Activated CD8-positive, alpha-beta T cell treated with anti-CD3 and anti-CD28 coated beads, Interleukin-2, amount 10 ng/mL, durations not matched to agents 7 days and 5 days (primary cell): ENCODE measurements at regions of chr6 and their contacts with region 1.

Region 1: DNA sequence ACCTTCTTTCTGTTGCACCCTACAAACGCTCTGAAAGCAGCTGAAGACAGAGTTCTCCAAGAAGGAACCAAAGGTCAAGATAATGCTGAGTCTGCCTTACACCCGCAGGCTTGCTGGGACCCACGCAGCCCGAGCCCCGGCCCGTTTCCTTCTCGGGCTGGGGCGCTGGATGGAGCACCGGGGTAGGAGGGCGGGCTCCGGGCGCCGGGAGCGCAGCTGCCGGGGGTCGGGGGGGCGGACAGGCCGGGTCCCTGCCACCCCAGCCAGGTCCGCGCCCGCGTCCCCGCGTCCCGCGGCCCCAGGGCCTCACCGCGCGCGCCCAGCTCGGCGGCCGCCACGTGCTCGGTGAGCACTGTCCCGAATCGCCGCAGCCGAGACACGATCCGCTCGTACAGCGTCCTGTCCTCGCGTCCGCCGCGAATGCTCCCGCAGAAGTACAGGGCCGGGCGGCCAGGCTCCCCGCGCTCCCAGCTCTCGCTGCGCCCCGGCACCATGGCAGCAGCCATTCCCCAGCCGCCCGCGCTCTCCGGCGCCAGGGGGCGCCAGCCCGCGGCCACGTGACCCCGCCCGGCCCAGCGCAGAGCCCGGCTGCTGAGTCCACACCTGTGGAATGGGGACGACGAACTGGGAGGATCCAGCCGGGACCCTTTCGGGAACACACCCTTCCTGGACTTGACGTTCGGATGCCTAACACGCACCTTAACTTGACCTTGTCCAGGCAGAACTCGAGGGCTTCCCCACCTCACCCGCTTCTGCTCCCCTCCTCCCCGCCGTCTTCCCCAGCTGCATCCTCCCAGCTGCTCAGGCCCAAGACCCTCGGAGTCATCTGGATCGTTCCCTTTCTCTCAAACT is at the start of gene DNPH1:
- DNase-seq: peak; percentile 78
- ATAC-seq: peak; percentile 90
- H3K4me3 Mint-ChIP-seq: peak within 1 kb of the TSS; percentile 82
- H3K27ac Mint-ChIP-seq: peak within 1 kb of the TSS; percentile 86
- H3K4me1 Mint-ChIP-seq: peaks cover 46% of the 10 kb centered on the region
- H3K27me3 Mint-ChIP-seq: peaks cover 8% of the 10 kb centered on the region
- total RNA-seq, gene DNPH1: 42.5 to 47.2 TPM

Region 2: DNA sequence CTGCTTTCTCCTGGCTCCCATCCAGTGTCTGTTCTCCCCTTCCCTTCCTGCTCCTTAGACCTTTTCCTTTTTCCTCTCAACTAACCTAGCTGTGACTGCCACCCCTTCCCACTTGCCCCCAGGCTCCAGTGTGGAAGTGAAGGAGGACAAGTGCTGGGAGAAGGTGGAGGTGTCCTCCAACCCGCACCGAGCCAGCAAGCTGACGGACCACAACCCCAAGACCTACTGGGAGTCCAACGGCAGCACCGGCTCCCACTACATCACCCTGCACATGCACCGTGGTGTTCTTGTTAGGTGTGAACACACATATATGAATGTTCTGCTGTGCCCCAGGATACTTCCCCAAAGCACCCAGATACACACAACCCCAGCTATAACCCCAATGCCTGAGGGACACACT is 28.6 kb before region 1 on chr6:
- CTCF ChIA-PET with region 1: interaction called, 11 read pairs
- POLR2A ChIA-PET with region 1: no interaction called
- DNase-seq: no peak
- ATAC-seq: no peak
- H3K4me3 Mint-ChIP-seq: no peak overlapping the region
- H3K27ac Mint-ChIP-seq: no peak overlapping the region
- H3K4me1 Mint-ChIP-seq: no peaks in the 10 kb centered on the region
- H3K27me3 Mint-ChIP-seq: no peaks in the 10 kb centered on the region

Region 3: DNA sequence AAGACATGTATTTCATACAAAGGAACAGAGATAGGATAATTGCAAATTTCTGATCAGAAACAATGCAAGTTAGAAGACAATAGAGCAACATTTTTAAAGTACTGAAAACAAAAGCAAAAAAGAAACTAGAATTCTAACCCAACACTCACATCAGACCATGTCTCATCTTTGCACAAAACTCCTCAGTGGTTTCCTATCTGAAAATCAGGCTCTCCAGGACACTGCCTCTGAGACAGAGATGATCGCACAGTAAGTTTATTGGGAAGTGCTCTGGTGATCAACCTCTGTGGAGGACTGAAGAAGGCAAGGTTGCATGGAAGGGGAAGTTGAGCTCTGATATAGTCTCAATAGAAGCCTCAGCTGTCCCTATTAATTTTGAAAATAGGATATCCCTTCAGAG is 11.8 kb after region 1 on chr6:
- CTCF ChIA-PET with region 1: interaction called, 36 read pairs
- POLR2A ChIA-PET with region 1: interaction called, 5 read pairs
- DNase-seq: no peak
- ATAC-seq: no peak
- H3K4me3 Mint-ChIP-seq: no peak overlapping the region
- H3K27ac Mint-ChIP-seq: no peak overlapping the region
- H3K4me1 Mint-ChIP-seq: peaks cover 2% of the 10 kb centered on the region
- H3K27me3 Mint-ChIP-seq: peaks cover 38% of the 10 kb centered on the region

Region 4: GRCh38 chr6:43247113-43247999 is 18.2 kb after region 1 on chr6:
- CTCF ChIA-PET with region 1: interaction called, 36 read pairs
- POLR2A ChIA-PET with region 1: interaction called, 3 read pairs
- DNase-seq: peak; percentile 86
- ATAC-seq: peak; percentile 98
- H3K4me3 Mint-ChIP-seq: peak overlapping the region; percentile 70
- H3K27ac Mint-ChIP-seq: peak overlapping the region; percentile 73
- H3K4me1 Mint-ChIP-seq: peaks cover 31% of the 10 kb centered on the region
- H3K27me3 Mint-ChIP-seq: peaks cover 32% of the 10 kb centered on the region

Region 5: DNA sequence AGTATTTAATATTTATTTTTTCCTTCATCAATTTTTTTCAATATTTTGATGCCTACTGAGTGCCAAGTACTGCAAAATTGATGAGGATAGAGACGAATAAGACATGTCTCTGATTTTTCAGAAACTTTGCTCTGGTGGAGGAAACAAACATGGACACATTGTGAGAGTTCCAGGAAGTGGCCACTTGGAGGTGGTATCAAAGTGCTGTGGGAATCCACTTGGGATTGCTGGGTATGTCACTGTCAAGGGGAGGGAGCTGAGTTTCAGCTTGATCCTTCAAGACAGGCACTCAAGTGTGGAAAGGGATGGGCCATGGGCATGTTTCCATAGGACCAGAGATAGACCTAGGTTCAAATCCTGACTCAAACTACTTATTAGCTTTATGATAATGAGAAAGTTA is 173.6 kb after region 1 on chr6:
- CTCF ChIA-PET with region 1: interaction called, 10 read pairs
- POLR2A ChIA-PET with region 1: no interaction called
- DNase-seq: no peak
- ATAC-seq: no peak
- H3K4me3 Mint-ChIP-seq: no peak overlapping the region
- H3K27ac Mint-ChIP-seq: no peak overlapping the region
- H3K4me1 Mint-ChIP-seq: peaks cover 1% of the 10 kb centered on the region
- H3K27me3 Mint-ChIP-seq: peaks cover 44% of the 10 kb centered on the region